ENCODE measurements at regions of chr19 and their contacts with region 1.

Region 1: DNA sequence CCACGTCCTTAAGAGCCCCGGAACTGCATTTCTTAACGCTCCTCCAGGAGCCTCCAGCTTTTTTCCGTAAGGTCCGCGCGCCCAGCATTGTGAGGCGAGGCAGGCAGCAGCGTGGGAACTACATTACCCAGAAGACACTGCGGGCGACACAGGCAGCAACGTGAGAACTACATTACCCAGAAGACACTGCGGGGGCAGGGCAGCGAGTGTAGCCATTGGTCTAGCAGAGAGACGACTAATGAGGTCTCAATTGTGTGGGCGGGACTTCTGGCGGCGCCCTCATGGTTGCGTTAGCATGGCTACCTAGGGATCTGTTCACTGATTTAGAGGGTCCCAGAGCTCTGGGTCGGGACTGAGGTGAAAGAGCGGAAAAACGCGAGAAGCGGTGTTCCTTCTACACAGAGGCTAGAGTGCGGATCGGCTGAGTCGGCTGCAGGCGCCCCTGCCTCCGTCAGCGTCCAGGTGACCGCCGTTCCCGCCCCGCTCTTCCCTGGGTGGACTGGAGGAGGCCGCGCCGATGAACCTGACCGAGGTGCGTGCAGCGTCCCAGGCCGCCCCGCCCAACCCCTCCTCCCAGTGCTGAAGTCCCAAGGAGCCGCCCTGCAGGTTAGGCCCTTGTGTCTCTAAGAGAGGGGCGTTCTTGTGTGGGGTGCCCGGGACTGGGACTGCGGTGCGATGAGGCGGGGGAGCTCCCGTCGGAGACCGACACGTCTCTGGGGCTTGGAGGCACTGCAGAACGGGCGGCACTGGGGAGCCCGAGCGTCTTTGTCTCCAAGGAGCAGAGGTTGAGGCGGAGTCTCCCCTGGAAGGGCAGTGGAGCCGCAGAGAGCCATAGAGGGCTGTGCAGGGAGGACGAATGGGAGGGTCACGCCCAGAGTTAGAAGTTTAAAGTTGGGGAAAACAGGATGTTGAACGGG is at the start of gene ZNF749:
- DNase-seq: peak; percentile 97
- ATAC-seq: peak; percentile 100
- H3K4me3 ChIP-seq: peak within 1 kb of the TSS; percentile 61 to 81 (median 69)
- H3K4me3 Mint-ChIP-seq: peak within 1 kb of the TSS; percentile 99
- H3K27ac ChIP-seq: peak within 1 kb of the TSS; percentile 18 to 78
- H3K27ac Mint-ChIP-seq: peak within 1 kb of the TSS; percentile 94
- H3K4me1 ChIP-seq: peaks cover 17% of the 10 kb centered on the region in 2 donors
- H3K4me1 Mint-ChIP-seq: peaks cover 28% of the 10 kb centered on the region
- H3K27me3 ChIP-seq: no peaks in the 10 kb centered on the region
- H3K27me3 Mint-ChIP-seq: no peaks in the 10 kb centered on the region
- CTCF ChIP-seq: no peak
- total RNA-seq, gene ZNF749: 17.4 and 20.1 TPM in 2 replicates

Region 2: GRCh38 chr19:57279418-57280066 is 155.8 kb before region 1 on chr19:
- CTCF ChIA-PET with region 1: no interaction called
- POLR2A ChIA-PET with region 1: no interaction called
- intact Hi-C with region 1: loop called (anchors 1 kb)
- DNase-seq: peak; percentile 92
- ATAC-seq: peak; percentile 73
- H3K4me3 ChIP-seq: peak overlapping the region; percentile 73 to 94 (median 91)
- H3K4me3 Mint-ChIP-seq: no peak overlapping the region
- H3K27ac ChIP-seq: peak overlapping the region; percentile 98 to 100
- H3K27ac Mint-ChIP-seq: no peak overlapping the region
- H3K4me1 ChIP-seq: peaks cover 29 to 33% of the 10 kb centered on the region in 2 donors
- H3K4me1 Mint-ChIP-seq: peaks cover 31% of the 10 kb centered on the region
- H3K27me3 ChIP-seq: no peaks in the 10 kb centered on the region
- H3K27me3 Mint-ChIP-seq: no peaks in the 10 kb centered on the region
- CTCF ChIP-seq: peak; percentile 26

Region 3: GRCh38 chr19:57410877-57411671 is 24.2 kb before region 1 on chr19 and contains the start of gene ZNF17:
- CTCF ChIA-PET with region 1: interaction called, 3 read pairs
- POLR2A ChIA-PET with region 1: no interaction called
- intact Hi-C with region 1: loop called (anchors 1 kb)
- DNase-seq: peak; percentile 93
- ATAC-seq: peak; percentile 100
- H3K4me3 ChIP-seq: peak within 1 kb of the TSS; percentile 66 to 98 (median 89)
- H3K4me3 Mint-ChIP-seq: peak within 1 kb of the TSS; percentile 97
- H3K27ac ChIP-seq: peak within 1 kb of the TSS; percentile 22 to 77
- H3K27ac Mint-ChIP-seq: peak within 1 kb of the TSS; percentile 89
- H3K4me1 ChIP-seq: peaks cover 12 to 17% of the 10 kb centered on the region in 2 donors
- H3K4me1 Mint-ChIP-seq: peaks cover 26% of the 10 kb centered on the region
- H3K27me3 ChIP-seq: no peaks in the 10 kb centered on the region
- H3K27me3 Mint-ChIP-seq: no peaks in the 10 kb centered on the region
- CTCF ChIP-seq: no peak
- total RNA-seq, gene ZNF17: 25.8 and 30.7 TPM in 2 replicates

Region 4: DNA sequence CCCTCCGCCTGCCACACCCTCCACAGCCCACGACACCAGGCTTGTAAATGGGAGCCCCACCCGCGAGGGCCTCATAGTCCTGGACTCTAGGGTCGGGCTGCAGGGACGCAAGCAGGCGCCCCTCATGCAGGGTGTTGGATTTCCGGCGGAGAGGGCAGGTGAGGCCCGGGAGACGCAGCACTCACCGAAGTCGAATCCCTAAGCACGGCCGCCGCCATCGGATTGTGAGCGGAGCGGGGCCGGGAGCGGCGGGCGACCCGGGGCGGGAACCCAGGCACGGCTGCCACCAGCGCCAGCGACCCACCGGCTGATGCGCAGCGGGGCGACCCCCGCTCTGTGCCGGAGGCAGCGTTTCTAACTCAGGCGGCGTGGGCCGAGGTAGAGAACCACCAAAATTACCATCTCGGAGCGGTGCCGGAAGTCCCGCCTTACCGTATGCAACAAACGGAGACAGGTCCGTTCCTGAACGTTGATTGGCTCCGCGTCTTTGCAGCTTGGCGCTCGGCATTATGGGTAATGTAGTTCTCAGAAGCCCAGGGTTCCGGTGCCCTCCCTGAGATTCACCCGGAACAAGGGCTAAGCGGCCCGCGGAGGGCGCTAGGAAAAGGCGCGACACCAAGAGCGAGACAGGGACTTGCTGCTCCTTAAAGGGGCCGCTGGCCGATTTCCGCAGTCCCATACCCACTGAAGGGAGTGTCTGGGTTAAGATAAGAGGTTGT is 143.3 kb after region 1 on chr19 and contains the start of gene ZNF416:
- CTCF ChIA-PET with region 1: no interaction called
- POLR2A ChIA-PET with region 1: no interaction called
- intact Hi-C with region 1: loop called (anchors 1 kb)
- DNase-seq: peak; percentile 99
- ATAC-seq: peak; percentile 89
- H3K4me3 ChIP-seq: peak within 1 kb of the TSS; percentile 28 to 90 (median 72)
- H3K4me3 Mint-ChIP-seq: peak within 1 kb of the TSS; percentile 86
- H3K27ac ChIP-seq: peak within 1 kb of the TSS; percentile 46 to 79
- H3K27ac Mint-ChIP-seq: peak within 1 kb of the TSS; percentile 94
- H3K4me1 ChIP-seq: peaks cover 19 to 27% of the 10 kb centered on the region in 2 donors
- H3K4me1 Mint-ChIP-seq: peaks cover 25% of the 10 kb centered on the region
- H3K27me3 ChIP-seq: no peaks in the 10 kb centered on the region
- H3K27me3 Mint-ChIP-seq: no peaks in the 10 kb centered on the region
- CTCF ChIP-seq: no peak
- total RNA-seq, gene ZNF416: 13.0 and 13.9 TPM in 2 replicates

Region 5: GRCh38 chr19:57746580-57747471 is 311.5 kb after region 1 on chr19 and contains the start of gene ZNF776:
- CTCF ChIA-PET with region 1: no interaction called
- POLR2A ChIA-PET with region 1: interaction called, 10 read pairs
- intact Hi-C with region 1: no loop called
- DNase-seq: peak; percentile 91
- ATAC-seq: peak; percentile 97
- H3K4me3 ChIP-seq: peak within 1 kb of the TSS; percentile 66 to 92 (median 74)
- H3K4me3 Mint-ChIP-seq: peak within 1 kb of the TSS; percentile 91
- H3K27ac ChIP-seq: peak within 1 kb of the TSS; percentile 75 to 84
- H3K27ac Mint-ChIP-seq: peak within 1 kb of the TSS; percentile 88
- H3K4me1 ChIP-seq: peaks cover 15 to 19% of the 10 kb centered on the region in 2 donors
- H3K4me1 Mint-ChIP-seq: peaks cover 39% of the 10 kb centered on the region
- H3K27me3 ChIP-seq: no peaks in the 10 kb centered on the region
- H3K27me3 Mint-ChIP-seq: no peaks in the 10 kb centered on the region
- CTCF ChIP-seq: no peak
- total RNA-seq, gene ZNF776: 47.5 and 51.6 TPM in 2 replicates

Region 6: DNA sequence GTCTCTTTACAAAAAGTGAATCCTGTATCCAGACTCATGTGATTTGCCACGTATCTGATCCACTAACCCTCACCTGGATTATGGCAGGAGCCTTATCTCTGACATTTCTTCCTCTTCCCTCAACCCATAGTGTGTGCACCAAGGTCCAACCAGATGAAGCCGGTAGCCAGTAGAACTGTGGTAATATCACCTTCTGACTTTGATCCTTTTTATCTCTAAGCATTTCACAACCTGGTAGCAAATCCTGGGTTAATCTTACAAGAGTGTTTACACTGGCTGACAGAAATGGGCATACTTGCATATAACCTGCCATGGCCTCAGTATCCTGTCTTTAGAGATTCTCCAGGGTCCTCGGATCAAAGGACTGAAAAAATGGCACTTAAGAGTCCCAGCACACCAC is 479.2 kb after region 1 on chr19:
- CTCF ChIA-PET with region 1: no interaction called
- POLR2A ChIA-PET with region 1: no interaction called
- intact Hi-C with region 1: loop called (anchors 1 kb)
- DNase-seq: no peak
- ATAC-seq: no peak
- H3K4me3 ChIP-seq: no peak overlapping the region
- H3K4me3 Mint-ChIP-seq: peak overlapping the region; percentile 96
- H3K27ac ChIP-seq: no peak overlapping the region
- H3K27ac Mint-ChIP-seq: peak overlapping the region; percentile 26
- H3K4me1 ChIP-seq: peaks cover 9 to 13% of the 10 kb centered on the region in 2 donors
- H3K4me1 Mint-ChIP-seq: peaks cover 40% of the 10 kb centered on the region
- H3K27me3 ChIP-seq: no peaks in the 10 kb centered on the region
- H3K27me3 Mint-ChIP-seq: no peaks in the 10 kb centered on the region
- CTCF ChIP-seq: no peak